Activated T-helper 1 cell treated with anti-CD3 and anti-CD28 coated beads, Interleukin-12 subunit alpha, Interleukin-12 subunit beta, Interleukin-2, Interleukin-4 antibody, amounts not matched to agents 30 ng/mL and 10 ng/mL and 1 ng/mL, durations not matched to agents 14 hours and 24 hours and 36 hours (primary cell): ENCODE measurements at regions of chr3 and their contacts with region 1.

Region 1: GRCh38 chr3:66500576-66501482 is at the start of gene LRIG1:
- DNase-seq: peak; percentile 99
- H3K4me3 Mint-ChIP-seq: peak within 1 kb of the TSS; percentile 99
- H3K27ac Mint-ChIP-seq: peak within 1 kb of the TSS; percentile 89
- H3K4me1 Mint-ChIP-seq: peaks cover 71% of the 10 kb centered on the region
- H3K27me3 Mint-ChIP-seq: peaks cover 18% of the 10 kb centered on the region
- total RNA-seq, gene LRIG1: 57.4 and 59.5 TPM in 2 replicates

Region 2: GRCh38 chr3:65963787-65964677 is 536.8 kb before region 1 on chr3:
- intact Hi-C with region 1: loop called (anchors 10 kb)
- DNase-seq: no peak
- H3K4me3 Mint-ChIP-seq: peak overlapping the region; percentile 40
- H3K27ac Mint-ChIP-seq: peak overlapping the region; percentile 57
- H3K4me1 Mint-ChIP-seq: peaks cover 13% of the 10 kb centered on the region
- H3K27me3 Mint-ChIP-seq: no peaks in the 10 kb centered on the region

Region 3: GRCh38 chr3:66220602-66221377 is 280.0 kb before region 1 on chr3 and contains the start of gene SLC25A26:
- intact Hi-C with region 1: loop called (anchors 1 kb)
- DNase-seq: peak; percentile 97
- H3K4me3 Mint-ChIP-seq: peak within 1 kb of the TSS; percentile 98
- H3K27ac Mint-ChIP-seq: peak within 1 kb of the TSS; percentile 85
- H3K4me1 Mint-ChIP-seq: peaks cover 41% of the 10 kb centered on the region
- H3K27me3 Mint-ChIP-seq: peaks cover 2% of the 10 kb centered on the region
- total RNA-seq, gene SLC25A26: 17.0 and 18.8 TPM in 2 replicates

Region 4: DNA sequence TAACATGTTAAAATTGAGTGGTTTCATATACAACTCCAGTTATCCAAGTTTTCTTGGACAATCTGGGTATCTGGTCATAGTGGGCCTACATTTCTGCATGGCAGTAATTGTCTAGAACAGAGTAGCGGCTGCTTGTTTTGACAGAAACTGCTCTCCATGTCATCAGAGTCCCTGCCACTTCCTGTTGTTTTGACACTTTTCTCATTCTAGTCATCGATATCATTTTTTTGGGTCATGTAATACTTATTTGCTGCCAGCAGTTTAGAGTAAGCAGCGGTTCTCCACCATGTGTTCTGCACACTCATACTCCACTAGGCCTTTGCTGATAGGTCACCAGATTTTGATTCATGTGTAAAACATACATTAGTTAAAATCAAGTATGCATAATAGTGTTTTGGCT is 198.5 kb before region 1 on chr3:
- intact Hi-C with region 1: loop called (anchors 2 kb)
- DNase-seq: peak; percentile 37
- H3K4me3 Mint-ChIP-seq: peak overlapping the region; percentile 32
- H3K27ac Mint-ChIP-seq: peak overlapping the region; percentile 91
- H3K4me1 Mint-ChIP-seq: peaks cover 65% of the 10 kb centered on the region
- H3K27me3 Mint-ChIP-seq: no peaks in the 10 kb centered on the region

Region 5: DNA sequence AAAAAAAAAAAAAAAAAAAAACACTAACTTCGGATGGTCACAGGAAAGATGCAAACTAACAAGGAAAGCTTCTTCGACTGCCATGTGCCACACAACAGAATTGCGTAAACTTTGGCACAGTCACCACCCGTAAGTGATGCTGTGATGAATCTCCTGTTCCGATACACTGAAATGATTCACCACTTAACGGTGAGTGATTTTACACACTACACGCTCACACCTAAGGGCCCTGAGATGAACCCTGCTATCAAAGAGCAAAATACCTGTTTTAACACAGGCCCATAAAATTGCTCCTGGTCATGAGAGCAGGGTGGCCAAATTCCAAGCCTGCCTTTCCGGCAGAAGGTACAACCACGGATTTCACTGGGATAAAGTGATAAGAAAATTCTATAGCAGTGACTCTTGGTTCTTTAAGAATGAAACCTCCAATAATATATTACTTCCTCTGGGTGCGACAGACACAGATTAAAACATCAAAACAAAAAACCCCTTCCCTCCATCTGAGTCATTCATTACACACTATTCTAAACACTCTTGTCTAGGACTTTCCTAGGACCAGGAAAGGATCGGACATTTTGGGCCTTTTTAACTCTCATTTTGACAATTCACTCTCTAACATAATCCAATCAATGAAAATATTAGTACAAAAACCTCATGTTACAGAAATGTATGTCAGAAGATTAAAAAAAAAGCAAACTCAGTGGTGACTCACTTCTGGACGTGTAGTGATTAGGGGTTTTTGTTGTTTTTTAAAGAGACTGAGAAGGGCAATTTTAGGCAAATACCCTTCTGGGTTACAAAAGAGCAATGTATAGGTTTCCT is 28.3 kb before region 1 on chr3:
- intact Hi-C with region 1: loop called (anchors 1 kb)
- DNase-seq: peak; percentile 48
- H3K4me3 Mint-ChIP-seq: peak overlapping the region; percentile 76
- H3K27ac Mint-ChIP-seq: no peak overlapping the region
- H3K4me1 Mint-ChIP-seq: peaks cover 44% of the 10 kb centered on the region
- H3K27me3 Mint-ChIP-seq: no peaks in the 10 kb centered on the region

Region 6: DNA sequence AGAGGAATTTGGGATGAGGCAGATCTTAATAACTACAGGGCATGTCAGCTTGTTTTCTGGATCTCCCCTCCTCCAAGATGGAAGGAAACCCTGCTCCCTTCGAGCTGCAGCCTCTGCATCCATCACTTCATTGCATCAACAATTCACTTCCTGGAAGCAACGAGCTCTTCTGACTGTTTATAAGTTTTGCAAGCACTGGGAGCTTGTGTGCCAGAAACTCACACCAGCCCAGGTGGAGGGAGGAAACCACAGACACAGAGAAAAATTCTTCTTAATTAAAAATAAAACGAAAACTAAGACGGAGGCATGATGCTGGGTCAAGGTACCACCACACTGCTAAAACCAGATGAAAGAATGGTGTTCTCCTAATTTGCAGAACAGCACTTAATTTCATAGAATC is 10.6 kb before region 1 on chr3:
- intact Hi-C with region 1: loop called (anchors 1 kb)
- DNase-seq: no peak
- H3K4me3 Mint-ChIP-seq: peak overlapping the region; percentile 77
- H3K27ac Mint-ChIP-seq: peak overlapping the region; percentile 90
- H3K4me1 Mint-ChIP-seq: peaks cover 97% of the 10 kb centered on the region
- H3K27me3 Mint-ChIP-seq: no peaks in the 10 kb centered on the region

Region 7: GRCh38 chr3:66998113-66998903 is 497.5 kb after region 1 on chr3 and contains the start of gene KBTBD8:
- intact Hi-C with region 1: loop called (anchors 1 kb)
- DNase-seq: peak; percentile 97
- H3K4me3 Mint-ChIP-seq: peak within 1 kb of the TSS; percentile 95
- H3K27ac Mint-ChIP-seq: peak within 1 kb of the TSS; percentile 88
- H3K4me1 Mint-ChIP-seq: peaks cover 36% of the 10 kb centered on the region
- H3K27me3 Mint-ChIP-seq: peaks cover 10% of the 10 kb centered on the region
- total RNA-seq, gene KBTBD8: 18.3 and 26.6 TPM in 2 replicates